ENCODE measurements at regions of chr19 and their contacts with region 1.

Region 1: GRCh38 chr19:13277104-13277809 is 127.0 kb downstream of the IER2 start:
- H3K4me3 ChIP-seq: no peak overlapping the region
- H3K27ac ChIP-seq: no peak overlapping the region
- H3K4me1 ChIP-seq: no peaks in the 10 kb centered on the region
- CTCF ChIP-seq: peak; percentile 54

Region 2: GRCh38 chr19:13212759-13213330 is 64.4 kb before region 1 on chr19:
- CTCF ChIA-PET with region 1: no interaction called
- POLR2A ChIA-PET with region 1: no interaction called
- H3K4me3 ChIP-seq: no peak overlapping the region
- H3K27ac ChIP-seq: no peak overlapping the region
- H3K4me1 ChIP-seq: no peaks in the 10 kb centered on the region
- CTCF ChIP-seq: no peak; the same call in none of the 2 replicates

Region 3: GRCh38 chr19:13428336-13428735 is 151.1 kb after region 1 on chr19:
- CTCF ChIA-PET with region 1: interaction called, 21 read pairs
- POLR2A ChIA-PET with region 1: no interaction called
- H3K4me3 ChIP-seq: no peak overlapping the region
- H3K27ac ChIP-seq: no peak overlapping the region
- H3K4me1 ChIP-seq: no peaks in the 10 kb centered on the region
- CTCF ChIP-seq: no peak

Region 4: GRCh38 chr19:13574933-13575332 is 297.7 kb after region 1 on chr19:
- CTCF ChIA-PET with region 1: interaction called, 29 read pairs
- POLR2A ChIA-PET with region 1: no interaction called
- H3K4me3 ChIP-seq: no peak overlapping the region
- H3K27ac ChIP-seq: no peak overlapping the region
- H3K4me1 ChIP-seq: no peaks in the 10 kb centered on the region
- CTCF ChIP-seq: peak; percentile 49; the same call in 1 of the 2 replicates

Measured in HEK293 (cell line).